Activated CD8-positive, alpha-beta T cell treated with anti-CD3 and anti-CD28 coated beads, Interleukin-2, amount 10 ng/mL, durations not matched to agents 7 days and 5 days (primary cell): ENCODE measurements at regions of chr19 and their contacts with region 1.

Region 1: DNA sequence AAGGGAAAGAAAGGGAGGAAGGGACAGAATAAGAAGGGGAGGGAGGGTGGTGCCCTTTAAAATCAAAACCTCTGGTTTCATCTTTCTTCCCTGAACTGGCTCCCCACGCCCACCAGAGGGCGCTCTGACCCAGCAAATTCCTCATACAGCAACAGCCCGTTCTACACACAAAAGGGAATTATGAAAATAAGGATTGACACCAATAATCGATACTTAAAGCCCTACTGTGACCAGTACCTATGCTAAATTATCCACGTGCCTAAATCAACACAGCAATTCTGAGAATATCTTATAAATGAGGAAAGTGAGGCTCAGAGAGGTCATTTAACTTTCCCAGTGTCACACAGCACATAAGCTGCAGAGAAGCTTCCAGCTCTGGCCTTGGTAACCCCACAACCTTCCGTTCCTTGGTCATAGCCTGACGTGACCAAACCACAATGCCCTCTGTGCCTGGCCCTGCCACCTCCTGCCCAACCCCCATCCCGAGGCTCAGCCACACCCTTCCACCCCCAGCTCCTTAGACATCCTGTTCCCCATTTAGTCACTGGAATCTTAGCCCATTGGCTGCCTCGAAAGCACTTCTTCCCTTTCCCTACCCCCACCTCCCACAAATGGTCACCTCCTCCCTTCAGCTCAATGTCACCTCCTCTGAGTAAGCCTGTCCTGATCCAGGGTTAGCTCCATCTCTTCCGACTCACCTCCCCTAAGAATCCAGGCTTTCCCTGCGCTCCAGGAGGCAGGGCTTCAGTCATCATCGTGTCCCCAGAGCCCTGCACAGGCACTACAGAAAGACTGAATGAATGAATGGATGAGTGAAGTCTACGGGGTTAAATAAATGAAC is 34.2 kb upstream of the PNMA8B start:
- DNase-seq: peak; percentile 81
- ATAC-seq: peak; percentile 81
- H3K4me3 Mint-ChIP-seq: peak overlapping the region; percentile 25
- H3K27ac Mint-ChIP-seq: peak overlapping the region; percentile 82
- H3K4me1 Mint-ChIP-seq: peaks cover 38% of the 10 kb centered on the region
- H3K27me3 Mint-ChIP-seq: no peaks in the 10 kb centered on the region

Region 2: GRCh38 chr19:46513461-46514236 is 16.2 kb before region 1 on chr19:
- CTCF ChIA-PET with region 1: interaction called, 406 read pairs
- POLR2A ChIA-PET with region 1: interaction called, 5 read pairs
- DNase-seq: peak; percentile 86
- ATAC-seq: peak; percentile 89
- H3K4me3 Mint-ChIP-seq: no peak overlapping the region
- H3K27ac Mint-ChIP-seq: no peak overlapping the region
- H3K4me1 Mint-ChIP-seq: peaks cover 20% of the 10 kb centered on the region
- H3K27me3 Mint-ChIP-seq: peaks cover 14% of the 10 kb centered on the region

Region 3: DNA sequence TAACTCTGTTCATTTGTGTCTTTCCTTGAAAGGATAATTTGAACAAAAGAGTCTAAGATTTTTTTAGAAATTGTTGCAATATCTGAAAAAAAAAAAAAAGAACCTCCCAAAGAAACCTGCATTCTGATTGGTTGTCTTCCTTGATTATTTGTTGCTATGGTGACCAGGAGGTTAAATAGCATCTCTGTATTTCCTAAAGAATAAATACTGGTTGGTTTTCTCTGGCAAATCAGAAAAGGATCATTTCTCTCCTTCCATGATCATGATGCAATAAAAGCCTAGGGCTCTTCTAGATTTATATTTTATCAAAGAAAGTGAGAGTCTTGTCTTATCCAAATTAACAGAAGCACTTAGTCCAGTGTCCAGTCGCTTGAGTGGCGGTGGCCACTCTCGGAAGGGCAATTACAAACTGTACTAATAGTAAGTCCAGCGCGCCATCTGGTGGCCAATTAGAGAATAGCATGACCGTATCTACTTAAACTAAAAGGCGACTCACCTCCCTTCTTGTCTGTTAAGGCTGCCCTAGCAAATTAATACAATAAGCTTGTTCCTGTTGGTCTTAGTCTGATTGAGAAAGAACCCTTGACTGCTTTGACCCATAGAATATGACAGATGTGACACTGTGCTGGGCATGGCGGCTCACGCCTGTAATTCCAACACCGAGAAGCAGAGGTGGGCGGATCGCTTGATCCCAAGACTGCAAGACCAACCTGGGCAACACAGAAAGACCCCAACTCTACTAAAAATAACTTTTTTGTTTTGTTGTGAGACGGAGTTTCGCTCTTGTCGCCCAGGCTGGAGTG is 12.8 kb after region 1 on chr19:
- CTCF ChIA-PET with region 1: interaction called, 406 read pairs
- POLR2A ChIA-PET with region 1: interaction called, 4 read pairs
- DNase-seq: peak; percentile 90
- ATAC-seq: peak; percentile 62
- H3K4me3 Mint-ChIP-seq: no peak overlapping the region
- H3K27ac Mint-ChIP-seq: no peak overlapping the region
- H3K4me1 Mint-ChIP-seq: peaks cover 12% of the 10 kb centered on the region
- H3K27me3 Mint-ChIP-seq: peaks cover 3% of the 10 kb centered on the region

Region 4: DNA sequence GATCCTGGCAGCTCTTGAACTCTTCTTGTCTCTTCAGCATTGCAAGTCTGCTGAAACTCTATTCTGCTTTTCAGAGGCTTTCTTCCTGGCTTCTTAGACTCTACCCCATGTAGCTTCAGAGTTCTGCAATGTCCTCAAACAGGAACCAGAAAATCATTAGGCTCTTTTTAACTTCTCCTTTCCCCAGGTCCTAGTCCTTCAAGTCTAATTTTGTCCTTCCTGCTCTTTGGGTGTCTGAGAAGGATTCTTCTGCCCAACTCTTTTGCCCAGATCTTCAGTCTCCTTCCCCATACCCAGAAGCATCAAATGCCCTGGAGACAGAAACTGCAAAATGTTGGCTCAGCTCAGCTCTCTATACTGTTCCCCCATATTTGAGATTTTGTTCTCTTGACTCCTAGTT is 21.3 kb after region 1 on chr19:
- CTCF ChIA-PET with region 1: interaction called, 406 read pairs
- POLR2A ChIA-PET with region 1: no interaction called
- DNase-seq: no peak
- ATAC-seq: no peak
- H3K4me3 Mint-ChIP-seq: no peak overlapping the region
- H3K27ac Mint-ChIP-seq: no peak overlapping the region
- H3K4me1 Mint-ChIP-seq: peaks cover 4% of the 10 kb centered on the region
- H3K27me3 Mint-ChIP-seq: peaks cover 10% of the 10 kb centered on the region

Region 5: DNA sequence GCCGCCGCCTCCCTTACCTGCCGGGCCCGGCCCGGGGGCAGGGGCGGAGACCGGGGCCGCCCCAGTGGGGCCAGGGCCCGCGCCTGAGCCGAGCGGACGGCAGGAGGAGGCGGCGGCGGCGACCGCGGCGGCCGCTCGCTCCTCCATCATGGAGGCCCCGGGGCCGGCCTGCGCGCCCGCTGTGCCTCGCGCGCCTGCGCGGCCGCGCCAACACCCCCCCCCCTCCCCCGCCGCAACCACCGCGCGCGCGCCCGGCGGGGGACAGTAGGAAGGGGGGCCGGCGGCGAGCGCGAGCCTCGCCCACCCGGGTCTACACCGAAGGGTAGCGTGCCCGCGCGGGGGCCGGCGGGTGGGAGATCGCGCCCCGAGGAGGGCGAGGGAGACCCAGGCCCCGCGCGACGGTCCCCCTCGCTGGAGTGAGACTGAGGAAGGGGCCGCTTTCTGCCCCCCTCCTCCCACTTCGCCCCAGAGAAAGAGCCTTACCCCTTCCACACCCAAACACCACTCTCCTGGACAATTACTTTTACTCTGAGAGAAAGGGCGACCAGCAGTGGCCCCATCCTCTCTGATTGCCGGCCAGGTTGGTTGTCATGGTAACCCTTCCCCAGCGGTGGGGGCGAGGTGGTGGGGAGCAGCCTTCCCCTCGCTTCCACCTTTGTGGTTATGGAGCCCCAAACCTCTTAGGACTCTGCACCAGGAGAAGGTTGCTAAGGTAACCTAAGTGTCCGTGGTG is 216.6 kb after region 1 on chr19 and contains the start of gene STRN4:
- CTCF ChIA-PET with region 1: interaction called, 14 read pairs
- POLR2A ChIA-PET with region 1: no interaction called
- DNase-seq: peak; percentile 65
- ATAC-seq: peak; percentile 56
- H3K4me3 Mint-ChIP-seq: peak within 1 kb of the TSS; percentile 94
- H3K27ac Mint-ChIP-seq: peak within 1 kb of the TSS; percentile 86
- H3K4me1 Mint-ChIP-seq: peaks cover 52% of the 10 kb centered on the region
- H3K27me3 Mint-ChIP-seq: no peaks in the 10 kb centered on the region
- total RNA-seq, gene STRN4: 79.6 to 90.2 TPM

Region 6: GRCh38 chr19:46753420-46754155 is 223.7 kb after region 1 on chr19:
- CTCF ChIA-PET with region 1: interaction called, 14 read pairs
- POLR2A ChIA-PET with region 1: no interaction called
- DNase-seq: peak; percentile 85
- ATAC-seq: peak; percentile 84
- H3K4me3 Mint-ChIP-seq: no peak overlapping the region
- H3K27ac Mint-ChIP-seq: no peak overlapping the region
- H3K4me1 Mint-ChIP-seq: peaks cover 25% of the 10 kb centered on the region
- H3K27me3 Mint-ChIP-seq: no peaks in the 10 kb centered on the region